Heart right ventricle (tissue), 16 donors: ENCODE measurements at regions of chr6 and their contacts with region 1.

Region 1: DNA sequence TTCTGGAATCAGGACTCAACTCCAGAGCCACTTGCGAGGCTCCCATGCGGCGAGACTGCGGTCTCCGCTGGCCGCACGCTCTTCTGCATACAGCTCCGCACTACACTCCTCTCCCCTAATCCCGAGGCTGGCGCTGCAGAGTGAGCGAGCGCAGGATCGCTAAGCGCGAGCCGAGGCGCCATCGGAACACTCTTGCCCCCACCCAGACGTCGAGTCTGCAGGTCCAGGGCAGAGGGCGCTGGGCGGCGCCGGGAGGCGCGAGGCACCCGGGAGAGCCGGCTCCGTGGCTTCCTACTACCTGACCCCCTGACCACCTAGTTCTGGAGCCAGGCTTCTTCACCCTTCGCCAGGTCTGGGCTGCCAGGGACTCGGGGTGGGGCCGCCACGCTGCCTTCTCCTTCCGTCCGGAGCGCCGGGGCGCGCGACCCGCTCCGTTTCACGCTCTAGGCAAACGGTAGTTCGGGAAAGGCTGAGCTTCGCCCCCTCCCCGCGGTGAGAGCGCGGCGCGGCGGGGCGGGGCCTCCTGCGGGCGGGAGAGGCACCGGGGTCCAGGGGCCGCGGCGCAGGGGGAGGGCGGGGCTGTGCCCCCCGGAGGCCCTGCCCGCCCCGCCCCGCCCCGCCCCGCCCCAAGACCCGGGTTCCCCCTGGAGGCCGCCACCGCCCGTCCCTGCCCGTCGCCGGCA is 5.4 kb upstream of the TUBB2A start:
- DNase-seq: peak; percentile 61 to 77
- ATAC-seq: peak; percentile 81 to 85 (median 84)
- H3K4me3 ChIP-seq: peak overlapping the region; percentile 56 to 88 (median 77)
- H3K27ac ChIP-seq: peak overlapping the region; percentile 83 to 97 (median 92)
- H3K4me1 ChIP-seq: peaks cover 0 to 61% (median 13%) of the 10 kb centered on the region in 9 donors
- H3K27me3 ChIP-seq: no peaks in the 10 kb centered on the region
- CTCF ChIP-seq: peak in 3 of 9 donors; percentile 19 to 30 (median 26)

Region 2: DNA sequence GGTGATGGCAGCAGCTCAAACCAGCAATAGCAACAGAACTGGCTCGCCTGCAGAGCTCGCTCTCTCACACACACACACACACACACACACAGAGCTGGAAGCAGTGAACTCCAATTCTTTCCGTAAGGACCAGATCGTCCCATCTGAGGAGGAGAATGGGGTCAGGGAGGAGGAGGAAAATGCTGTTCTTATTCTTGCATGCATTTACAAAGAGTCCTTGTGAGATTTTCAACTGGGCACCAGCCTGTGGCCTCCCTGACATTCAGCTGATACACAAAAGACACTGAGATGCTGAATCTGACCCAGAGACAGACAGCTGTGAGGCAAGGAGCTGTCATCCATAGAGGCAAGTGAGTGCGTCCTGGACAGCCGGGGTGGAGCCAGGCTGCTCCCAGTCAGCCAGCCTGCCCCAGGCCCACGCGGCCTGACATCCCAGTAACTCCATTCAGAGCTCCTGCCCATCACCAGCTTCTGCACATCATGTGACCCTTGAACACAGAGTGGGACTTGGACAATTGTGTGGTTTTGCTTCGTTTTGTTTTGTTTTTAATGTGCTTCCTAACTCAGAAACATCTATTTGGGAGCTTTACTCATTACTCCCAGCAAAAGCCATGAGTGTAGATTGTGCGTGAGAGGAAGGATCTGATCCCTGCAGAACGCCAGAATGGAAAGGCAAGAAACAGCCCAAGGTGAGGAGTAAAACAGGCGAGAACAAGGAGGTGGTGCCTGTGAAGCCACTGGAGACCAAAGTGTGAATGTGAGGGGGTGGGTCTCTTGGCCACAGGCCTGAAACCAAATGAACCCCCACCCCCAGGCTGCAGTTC is 261.7 kb before region 1 on chr6:
- intact Hi-C with region 1: no loop called
- DNase-seq: peak in 1 of 2 donors; percentile 71
- ATAC-seq: peak in 1 of 8 donors; percentile 17
- H3K4me3 ChIP-seq: peak overlapping the region in 8 of 10 donors; percentile 12 to 93 (median 72)
- H3K27ac ChIP-seq: peak overlapping the region in 4 of 10 donors; percentile 11 to 94 (median 66)
- H3K4me1 ChIP-seq: peaks cover 0 to 41% (median 28%) of the 10 kb centered on the region in 9 donors
- H3K27me3 ChIP-seq: no peaks in the 10 kb centered on the region
- CTCF ChIP-seq: no peak

Region 3: DNA sequence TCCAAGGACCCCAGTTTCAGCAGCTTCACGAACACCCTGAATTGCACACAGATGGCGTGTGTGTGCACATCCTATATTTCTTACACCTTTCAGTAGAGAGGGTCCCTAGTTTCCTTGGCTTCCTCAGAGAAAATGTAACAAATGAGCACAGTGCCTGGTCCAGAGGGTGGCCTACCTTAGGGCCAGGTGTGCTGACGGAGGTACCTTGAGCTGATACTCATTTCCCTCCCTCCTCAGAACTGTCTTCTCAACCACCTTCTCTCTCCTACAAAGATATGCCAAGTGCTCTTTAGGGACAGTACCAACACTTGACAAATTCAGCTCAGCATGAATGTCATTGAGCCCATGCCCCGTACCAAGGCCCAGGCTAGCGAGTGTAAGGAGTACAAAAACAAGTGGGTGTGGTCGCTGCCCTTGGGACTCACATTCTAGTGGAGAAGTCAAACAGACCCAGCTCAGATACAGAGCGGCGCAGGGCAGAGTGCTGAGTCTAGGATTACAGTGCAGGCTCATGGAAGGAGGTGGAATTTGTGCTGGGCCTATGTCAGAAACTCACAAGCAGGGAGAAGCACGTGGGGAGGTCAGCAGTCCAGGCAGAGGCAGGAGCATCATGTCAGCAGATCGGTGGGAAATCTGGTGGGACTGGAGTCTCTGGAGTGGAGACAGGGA is 53.8 kb before region 1 on chr6:
- intact Hi-C with region 1: no loop called
- DNase-seq: no peak
- ATAC-seq: peak in 5 of 8 donors; percentile 11 to 47 (median 36)
- H3K4me3 ChIP-seq: no peak overlapping the region
- H3K27ac ChIP-seq: no peak overlapping the region
- H3K4me1 ChIP-seq: no peaks in the 10 kb centered on the region
- H3K27me3 ChIP-seq: no peaks in the 10 kb centered on the region
- CTCF ChIP-seq: no peak

Region 4: GRCh38 chr6:3125815-3126214 is 36.9 kb before region 1 on chr6:
- intact Hi-C with region 1: loop called in 2 of 10 experiments (anchors 2 to 5 kb)
- DNase-seq: no peak
- ATAC-seq: no peak
- H3K4me3 ChIP-seq: no peak overlapping the region
- H3K27ac ChIP-seq: peak overlapping the region in 1 of 10 donors; percentile 51
- H3K4me1 ChIP-seq: peaks cover 0 to 12% (median 0%) of the 10 kb centered on the region in 9 donors
- H3K27me3 ChIP-seq: no peaks in the 10 kb centered on the region
- CTCF ChIP-seq: no peak

Region 5: DNA sequence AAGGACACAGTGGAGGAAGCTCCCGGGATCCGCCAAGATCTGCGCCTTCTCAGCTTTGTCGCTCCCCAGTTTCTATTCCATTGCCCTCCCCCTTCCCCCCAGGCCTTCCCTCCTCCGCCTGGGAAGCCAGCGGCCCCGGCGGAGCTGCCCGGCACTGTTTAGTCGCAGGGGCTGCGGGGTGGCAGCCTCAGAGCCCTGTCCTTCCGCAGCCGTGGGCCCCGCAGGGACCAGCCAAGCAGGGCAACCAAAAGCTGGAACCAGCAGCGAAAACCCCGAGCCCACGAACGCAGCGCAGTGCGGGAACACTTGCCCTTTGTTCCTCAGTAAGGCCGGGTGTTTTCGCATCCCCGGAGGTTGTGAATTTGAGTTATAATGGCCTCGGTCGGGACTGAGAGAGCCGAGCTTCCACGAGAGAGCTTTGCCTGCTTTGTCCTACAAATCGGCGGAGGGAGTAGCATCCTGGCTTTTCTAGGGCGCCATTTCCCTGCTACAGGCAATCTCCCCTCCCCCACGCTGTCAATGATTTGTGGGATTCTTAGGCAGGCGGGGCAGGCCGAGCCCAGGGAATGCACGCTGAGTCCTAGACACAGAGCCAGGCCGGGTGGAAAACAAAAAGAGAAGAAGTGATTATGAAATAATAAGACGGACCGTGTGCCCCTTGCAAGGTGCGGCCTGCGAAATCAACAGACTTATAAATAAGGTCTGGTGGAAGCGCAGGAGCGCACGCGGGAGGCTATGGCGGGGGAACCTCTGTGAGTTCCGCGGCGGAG is 68.7 kb after region 1 on chr6:
- intact Hi-C with region 1: loop called in 2 of 10 experiments (anchors 5 kb)
- DNase-seq: peak in 1 of 2 donors; percentile 84
- ATAC-seq: peak; percentile 66 to 89 (median 84)
- H3K4me3 ChIP-seq: peak overlapping the region; percentile 54 to 76 (median 59)
- H3K27ac ChIP-seq: peak overlapping the region in 9 of 10 donors; percentile 51 to 79 (median 72)
- H3K4me1 ChIP-seq: peaks cover 21 to 58% (median 46%) of the 10 kb centered on the region in 9 donors
- H3K27me3 ChIP-seq: peaks cover 0 to 99% (median 83%) of the 10 kb centered on the region in 7 donors
- CTCF ChIP-seq: no peak

Region 6: DNA sequence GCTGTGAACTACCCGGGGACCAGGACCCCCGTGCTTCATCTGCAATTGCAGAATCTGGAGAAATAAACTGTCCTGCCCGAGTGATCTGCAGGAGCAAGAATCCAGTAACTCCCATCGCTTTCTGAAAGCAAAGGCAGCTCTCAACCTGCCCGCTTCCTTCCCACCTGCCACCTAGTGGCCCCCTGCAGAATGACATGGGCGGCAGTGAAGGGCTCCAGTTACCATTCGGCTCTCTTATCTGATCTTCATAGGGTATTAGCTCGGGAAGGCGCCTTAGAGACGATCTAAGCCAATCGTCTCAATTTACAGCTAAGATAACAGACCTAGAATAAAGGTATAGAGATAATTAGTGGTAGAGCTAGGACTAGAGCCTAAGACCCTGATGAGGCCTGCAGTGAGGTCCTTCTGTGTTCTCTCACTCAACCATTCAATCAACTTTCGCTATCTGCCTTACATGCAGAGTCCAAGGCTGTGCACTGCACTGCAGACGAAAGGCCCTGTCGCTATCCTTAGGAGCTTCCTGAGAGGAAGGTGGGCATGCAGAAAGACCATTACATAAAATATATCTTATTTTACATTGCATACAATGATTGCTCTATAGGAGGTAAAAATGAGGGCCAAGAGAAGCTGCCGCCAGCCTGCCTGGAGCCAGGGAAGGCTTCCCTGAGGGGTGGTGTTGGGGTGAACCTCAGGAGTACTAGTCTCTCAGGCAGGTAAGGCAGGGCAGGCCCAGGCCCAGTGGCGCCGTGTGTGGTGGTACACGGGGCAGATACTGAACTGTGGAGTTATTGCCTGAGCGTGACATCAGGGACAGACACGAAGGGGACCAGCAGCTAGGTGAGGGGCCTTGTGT is 89.0 kb after region 1 on chr6:
- intact Hi-C with region 1: loop called in 6 of 10 experiments (anchors 2 to 10 kb)
- DNase-seq: peak; percentile 85
- ATAC-seq: peak; percentile 73 to 90 (median 83)
- H3K4me3 ChIP-seq: peak overlapping the region in 2 of 10 donors; percentile 16 to 27
- H3K27ac ChIP-seq: no peak overlapping the region
- H3K4me1 ChIP-seq: peaks cover 0 to 40% (median 15%) of the 10 kb centered on the region in 9 donors
- H3K27me3 ChIP-seq: peaks cover 0 to 39% (median 13%) of the 10 kb centered on the region in 7 donors
- CTCF ChIP-seq: peak; percentile 88 to 98 (median 97)

Region 7: GRCh38 chr6:3258720-3259490 is 96.2 kb after region 1 on chr6 and contains the start of gene PSMG4:
- intact Hi-C with region 1: loop called in 5 of 10 experiments (anchors 2 to 10 kb)
- DNase-seq: peak; percentile 97 to 98
- ATAC-seq: peak; percentile 97 to 98 (median 98)
- H3K4me3 ChIP-seq: peak within 1 kb of the TSS; percentile 76 to 99 (median 94)
- H3K27ac ChIP-seq: peak within 1 kb of the TSS; percentile 14 to 92 (median 84)
- H3K4me1 ChIP-seq: peaks cover 2 to 41% (median 28%) of the 10 kb centered on the region in 9 donors
- H3K27me3 ChIP-seq: no peaks in the 10 kb centered on the region
- CTCF ChIP-seq: peak in 2 of 9 donors; percentile 4 to 21
- total RNA-seq, gene PSMG4: 8.1 to 10.8 (median 10.0) TPM